Heart left ventricle (tissue), 16 donors: ENCODE measurements at regions of chr16 and their contacts with region 1.

Region 1: DNA sequence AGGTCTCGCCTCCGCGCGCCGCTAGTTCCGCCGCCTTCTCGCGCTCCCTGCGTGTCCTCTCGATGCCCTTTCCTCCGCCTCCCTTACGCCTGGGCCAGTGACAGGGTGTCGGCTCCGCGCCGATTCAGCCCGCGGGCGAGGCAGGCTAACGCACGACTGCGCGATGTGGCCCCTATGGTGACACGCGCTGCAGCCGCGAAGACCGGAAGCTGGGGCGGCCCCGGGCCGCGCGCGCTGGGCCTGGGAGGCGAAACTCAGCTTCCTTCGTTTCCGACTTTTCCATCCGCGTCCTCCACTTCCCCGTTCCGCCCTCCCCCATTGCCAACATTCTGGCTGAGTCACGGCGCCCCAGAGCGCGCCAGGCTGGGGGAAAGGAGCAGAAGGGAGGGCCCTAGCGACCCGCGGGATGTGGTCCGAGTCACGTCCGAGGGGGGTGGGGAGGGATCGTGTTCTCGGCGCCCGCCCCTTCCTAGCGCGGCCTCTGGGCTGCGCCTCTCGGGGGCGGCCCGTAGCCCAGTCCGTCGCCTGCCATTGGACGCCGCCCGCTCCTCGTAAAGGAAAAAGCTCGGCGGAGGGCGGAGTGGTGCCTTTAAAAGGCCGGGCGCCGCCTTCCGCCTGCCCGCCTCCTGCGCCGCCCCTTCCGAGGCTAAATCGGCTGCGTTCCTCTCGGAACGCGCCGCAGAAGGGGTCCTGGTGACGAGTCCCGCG is at the start of gene ALDOA:
- DNase-seq: peak; percentile 99
- ATAC-seq: peak; percentile 87 to 93 (median 90)
- H3K4me3 ChIP-seq: peak within 1 kb of the TSS; percentile 84 to 99 (median 96)
- H3K27ac ChIP-seq: peak within 1 kb of the TSS; percentile 92 to 100 (median 99)
- H3K4me1 ChIP-seq: peaks cover 0 to 63% (median 55%) of the 10 kb centered on the region in 12 donors
- H3K27me3 ChIP-seq: no peaks in the 10 kb centered on the region
- CTCF ChIP-seq: peak in 1 of 12 donors; percentile 27
- POLR2A ChIP-seq: peak; percentile 98 to 99
- total RNA-seq, gene ALDOA: 2,644 to 5,076 (median 3,574) TPM

Region 2: GRCh38 chr16:29995911-29996772 is 69.2 kb before region 1 on chr16 and contains the start of gene INO80E:
- intact Hi-C with region 1: loop called in 1 of 10 experiments (anchors 5 kb)
- DNase-seq: peak; percentile 99 to 100 (median 99)
- ATAC-seq: peak; percentile 98 to 99 (median 98)
- H3K4me3 ChIP-seq: peak within 1 kb of the TSS; percentile 53 to 95 (median 80)
- H3K27ac ChIP-seq: peak within 1 kb of the TSS; percentile 88 to 100 (median 96)
- H3K4me1 ChIP-seq: peaks cover 0 to 31% (median 18%) of the 10 kb centered on the region in 12 donors
- H3K27me3 ChIP-seq: no peaks in the 10 kb centered on the region
- CTCF ChIP-seq: no peak
- POLR2A ChIP-seq: peak in 1 of 2 donors; percentile 58
- total RNA-seq, gene INO80E: 27.6 to 65.4 (median 32.6) TPM

Region 3: GRCh38 chr16:30122604-30123160 is 57.4 kb after region 1 on chr16:
- intact Hi-C with region 1: loop called in 2 of 10 experiments (anchors 5 to 10 kb)
- DNase-seq: peak in 2 of 5 donors; percentile 47 to 64
- ATAC-seq: peak in 3 of 4 donors; percentile 15 to 38 (median 17)
- H3K4me3 ChIP-seq: peak overlapping the region; percentile 64 to 96 (median 81)
- H3K27ac ChIP-seq: peak overlapping the region; percentile 87 to 99 (median 95)
- H3K4me1 ChIP-seq: peaks cover 0 to 41% (median 15%) of the 10 kb centered on the region in 12 donors
- H3K27me3 ChIP-seq: no peaks in the 10 kb centered on the region
- CTCF ChIP-seq: no peak
- POLR2A ChIP-seq: no peak

Region 4: GRCh38 chr16:30417529-30418349 is 352.4 kb after region 1 on chr16:
- intact Hi-C with region 1: loop called in 2 of 10 experiments (anchors 10 kb)
- DNase-seq: peak; percentile 84 to 93 (median 87)
- ATAC-seq: peak; percentile 89 to 96 (median 92)
- H3K4me3 ChIP-seq: peak overlapping the region; percentile 38 to 76 (median 64)
- H3K27ac ChIP-seq: peak overlapping the region; percentile 14 to 91 (median 77)
- H3K4me1 ChIP-seq: peaks cover 0 to 27% (median 10%) of the 10 kb centered on the region in 12 donors
- H3K27me3 ChIP-seq: no peaks in the 10 kb centered on the region
- CTCF ChIP-seq: peak in 7 of 12 donors; percentile 12 to 46 (median 28)
- POLR2A ChIP-seq: peak in 1 of 2 donors; percentile 45

Region 5: GRCh38 chr16:30657866-30658730 is 592.8 kb after region 1 on chr16 and contains the start of gene FBRS:
- intact Hi-C with region 1: loop called in 1 of 10 experiments (anchors 2 kb)
- DNase-seq: peak; percentile 100
- ATAC-seq: peak; percentile 87 to 94 (median 92)
- H3K4me3 ChIP-seq: peak within 1 kb of the TSS; percentile 68 to 96 (median 90)
- H3K27ac ChIP-seq: peak within 1 kb of the TSS; percentile 96 to 100 (median 98)
- H3K4me1 ChIP-seq: peaks cover 0 to 47% (median 39%) of the 10 kb centered on the region in 12 donors
- H3K27me3 ChIP-seq: no peaks in the 10 kb centered on the region
- CTCF ChIP-seq: peak; percentile 74 to 99 (median 90)
- POLR2A ChIP-seq: peak in 1 of 2 donors; percentile 70
- total RNA-seq, gene FBRS: 16.3 to 38.3 (median 31.9) TPM